ENCODE measurements at regions of chr4 and their contacts with region 1.

Region 1: GRCh38 chr4:21469438-21470300 is 478.9 kb downstream of the KCNIP4 start:
- DNase-seq: peak; percentile 16
- H3K4me3 ChIP-seq: no peak overlapping the region
- H3K27ac ChIP-seq: no peak overlapping the region
- H3K4me1 ChIP-seq: peaks cover 13% of the 10 kb centered on the region
- H3K27me3 ChIP-seq: peaks cover 5% of the 10 kb centered on the region
- CTCF ChIP-seq: peak; percentile 62 to 76

Region 2: GRCh38 chr4:20773144-20773997 is 696.3 kb before region 1 on chr4:
- CTCF ChIA-PET with region 1: no interaction called
- dilution Hi-C with region 1: no loop called
- in situ Hi-C with region 1: loop called (anchors 25 kb)
- intact Hi-C with region 1: loop called (anchors 1 kb)
- DNase-seq: peak; percentile 53
- H3K4me3 ChIP-seq: no peak overlapping the region
- H3K27ac ChIP-seq: no peak overlapping the region
- H3K4me1 ChIP-seq: no peaks in the 10 kb centered on the region
- H3K27me3 ChIP-seq: no peaks in the 10 kb centered on the region
- CTCF ChIP-seq: peak; percentile 69 to 76

Region 3: GRCh38 chr4:21134994-21135393 is 334.7 kb before region 1 on chr4:
- CTCF ChIA-PET with region 1: no interaction called
- dilution Hi-C with region 1: no loop called
- in situ Hi-C with region 1: no loop called
- intact Hi-C with region 1: loop called (anchors 1 kb)
- DNase-seq: peak; percentile 29
- H3K4me3 ChIP-seq: no peak overlapping the region
- H3K27ac ChIP-seq: no peak overlapping the region
- H3K4me1 ChIP-seq: no peaks in the 10 kb centered on the region
- H3K27me3 ChIP-seq: peaks cover 2% of the 10 kb centered on the region
- CTCF ChIP-seq: peak; percentile 43 to 56

Region 4: GRCh38 chr4:21184788-21185187 is 284.9 kb before region 1 on chr4:
- CTCF ChIA-PET with region 1: no interaction called
- dilution Hi-C with region 1: no loop called
- in situ Hi-C with region 1: loop called in 1 of 2 experiments (anchors 25 kb)
- intact Hi-C with region 1: loop called (anchors 1 kb)
- DNase-seq: no peak
- H3K4me3 ChIP-seq: no peak overlapping the region
- H3K27ac ChIP-seq: no peak overlapping the region
- H3K4me1 ChIP-seq: no peaks in the 10 kb centered on the region
- H3K27me3 ChIP-seq: no peaks in the 10 kb centered on the region
- CTCF ChIP-seq: peak; percentile 11 to 37

Region 5: DNA sequence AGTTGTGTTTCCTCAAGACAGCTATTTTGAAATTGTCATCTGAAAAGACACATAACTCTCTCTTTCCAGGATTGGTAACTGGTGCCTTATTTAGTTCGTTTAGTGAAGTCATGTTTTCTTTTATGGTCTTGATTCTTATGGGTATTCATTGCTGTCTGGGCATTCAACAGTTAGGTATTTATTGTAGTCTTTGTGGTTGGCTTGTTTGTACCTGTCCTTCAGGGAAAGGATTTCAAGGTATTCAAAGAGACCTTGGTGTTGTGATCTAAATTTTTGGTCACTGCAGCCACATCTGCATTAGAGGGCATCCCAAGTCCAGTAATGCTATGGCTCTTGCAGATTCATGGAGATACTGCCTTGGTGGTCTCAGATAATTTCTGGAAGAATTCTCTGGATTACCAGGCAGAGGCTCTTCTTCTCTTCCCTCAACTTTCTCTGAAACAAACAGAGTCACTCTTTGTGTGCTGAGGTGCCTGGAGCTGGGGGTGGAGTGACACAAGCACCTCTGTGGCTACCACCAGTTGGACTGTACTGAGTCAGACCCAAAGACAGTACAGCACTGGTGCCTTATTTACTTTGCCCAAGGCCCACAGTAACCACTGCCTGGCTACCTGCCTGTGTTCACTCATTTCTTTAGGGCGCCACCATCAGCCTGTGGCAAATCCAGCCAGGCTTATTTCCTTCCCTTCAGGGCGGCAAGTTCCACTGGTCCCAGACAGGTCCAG is 141.5 kb before region 1 on chr4:
- CTCF ChIA-PET with region 1: no interaction called
- dilution Hi-C with region 1: no loop called
- in situ Hi-C with region 1: no loop called
- intact Hi-C with region 1: loop called (anchors 10 kb)
- DNase-seq: peak; percentile 78
- H3K4me3 ChIP-seq: no peak overlapping the region
- H3K27ac ChIP-seq: no peak overlapping the region
- H3K4me1 ChIP-seq: no peaks in the 10 kb centered on the region
- H3K27me3 ChIP-seq: no peaks in the 10 kb centered on the region
- CTCF ChIP-seq: no peak

Region 6: DNA sequence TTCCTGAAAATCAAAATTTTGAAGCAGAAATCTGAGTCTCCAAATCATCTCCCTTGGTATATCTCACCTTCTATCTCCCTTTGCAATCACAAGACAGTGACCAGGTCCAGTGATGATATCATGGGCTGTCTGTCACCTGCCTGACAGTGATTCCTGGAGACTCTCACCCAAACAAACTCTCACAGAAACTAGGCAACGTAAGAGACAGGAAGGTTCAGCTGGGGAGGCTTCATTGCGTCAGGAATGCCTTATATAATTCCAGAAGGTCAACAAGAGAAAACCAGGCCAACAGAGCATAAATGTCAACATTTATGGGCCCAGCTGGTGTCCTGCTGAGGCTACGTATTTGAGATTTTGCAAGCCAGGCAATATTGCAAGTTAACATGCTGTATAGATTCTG is 66.2 kb after region 1 on chr4:
- CTCF ChIA-PET with region 1: no interaction called
- dilution Hi-C with region 1: no loop called
- in situ Hi-C with region 1: no loop called
- intact Hi-C with region 1: no loop called
- DNase-seq: no peak
- H3K4me3 ChIP-seq: no peak overlapping the region
- H3K27ac ChIP-seq: no peak overlapping the region
- H3K4me1 ChIP-seq: no peaks in the 10 kb centered on the region
- H3K27me3 ChIP-seq: peaks cover 2% of the 10 kb centered on the region
- CTCF ChIP-seq: no peak

Measured in mammary epithelial cell (primary cell).